OCI-LY7 (cell line): ENCODE measurements at regions of chr4 and their contacts with region 1.

Region 1: GRCh38 chr4:73998040-73999011 is at the start of gene CXCL5:
- DNase-seq: no peak
- H3K4me3 ChIP-seq: no peak within 1 kb of the TSS
- H3K27ac ChIP-seq: no peak within 1 kb of the TSS
- H3K4me1 ChIP-seq: no peaks in the 10 kb centered on the region
- CTCF ChIP-seq: no peak
- total RNA-seq, gene CXCL5: not detected in 2 replicates

Region 2: GRCh38 chr4:73984736-73985527 is 13.4 kb before region 1 on chr4:
- CTCF ChIA-PET with region 1: no interaction called
- POLR2A ChIA-PET with region 1: interaction called, 10 read pairs
- intact Hi-C with region 1: no loop called
- DNase-seq: no peak
- H3K4me3 ChIP-seq: no peak overlapping the region
- H3K27ac ChIP-seq: no peak overlapping the region
- H3K4me1 ChIP-seq: no peaks in the 10 kb centered on the region
- CTCF ChIP-seq: no peak

Region 3: DNA sequence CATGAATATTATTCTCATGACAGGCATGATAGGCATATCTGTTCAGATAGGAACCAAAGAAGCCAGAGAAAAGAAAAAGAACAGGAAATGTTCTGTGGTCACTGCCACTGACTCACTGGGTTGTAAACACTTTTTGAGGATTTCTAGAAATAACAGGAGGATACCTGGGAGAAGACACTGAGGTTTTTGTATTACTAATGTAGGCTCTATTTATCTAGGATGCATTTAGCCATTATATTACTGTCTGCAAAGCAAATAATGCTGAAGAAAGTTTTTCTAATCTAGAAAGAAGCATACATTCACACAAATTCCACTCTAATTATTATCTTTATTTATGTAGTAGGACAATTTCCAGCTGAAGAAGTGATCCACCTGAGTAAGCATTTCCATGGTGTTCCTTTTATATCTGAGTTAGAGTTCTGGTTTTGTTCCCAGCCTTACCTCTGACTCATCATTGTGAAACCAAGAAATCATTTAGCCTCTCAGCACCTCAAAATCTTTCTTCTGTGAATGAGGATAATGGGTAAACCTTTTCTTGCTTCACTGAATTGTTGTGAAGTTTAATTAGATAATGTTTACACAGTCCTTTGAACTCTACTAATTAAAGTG is 269.8 kb after region 1 on chr4:
- CTCF ChIA-PET with region 1: no interaction called
- POLR2A ChIA-PET with region 1: no interaction called
- intact Hi-C with region 1: no loop called
- DNase-seq: no peak
- H3K4me3 ChIP-seq: no peak overlapping the region
- H3K27ac ChIP-seq: no peak overlapping the region
- H3K4me1 ChIP-seq: no peaks in the 10 kb centered on the region
- CTCF ChIP-seq: no peak